Transverse colon (tissue), 4 donors: ENCODE measurements at regions of chr5 and their contacts with region 1.

Region 1: GRCh38 chr5:33409435-33410170 is 31.2 kb upstream of the TARS1 start:
- DNase-seq: peak; percentile 57
- H3K4me3 ChIP-seq: no peak overlapping the region
- H3K27ac ChIP-seq: peak overlapping the region; percentile 10 to 82 (median 57)
- H3K4me1 ChIP-seq: no peaks in the 10 kb centered on the region
- H3K27me3 ChIP-seq: no peaks in the 10 kb centered on the region
- CTCF ChIP-seq: no peak
- EP300 ChIP-seq: peak; percentile 44
- POLR2A ChIP-seq: no peak

Region 2: DNA sequence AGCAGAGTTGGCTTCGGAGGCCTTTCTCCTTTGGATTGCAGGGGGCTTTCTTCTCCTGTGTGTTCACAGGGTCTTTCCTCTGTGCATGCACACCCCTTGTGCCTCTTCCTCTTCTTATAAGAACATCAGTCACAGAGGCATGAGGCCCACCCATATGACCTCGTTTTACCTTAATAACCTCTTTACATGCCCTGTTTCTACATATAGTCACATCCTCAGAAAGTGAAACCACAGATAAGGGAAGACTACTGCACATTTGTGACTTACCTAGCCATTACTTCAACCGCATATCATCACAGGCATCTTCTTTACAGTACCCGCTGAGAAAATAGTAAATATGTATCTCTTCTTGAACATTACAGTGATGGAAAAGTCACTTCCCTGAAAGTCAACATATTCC is 173.8 kb before region 1 on chr5:
- in situ Hi-C with region 1: no loop called
- intact Hi-C with region 1: loop called (anchors 10 kb)
- DNase-seq: no peak
- H3K4me3 ChIP-seq: no peak overlapping the region
- H3K27ac ChIP-seq: no peak overlapping the region
- H3K4me1 ChIP-seq: peaks cover 0 to 29% (median 0%) of the 10 kb centered on the region in 4 donors
- H3K27me3 ChIP-seq: no peaks in the 10 kb centered on the region
- CTCF ChIP-seq: no peak
- EP300 ChIP-seq: no peak
- POLR2A ChIP-seq: no peak

Region 3: GRCh38 chr5:33398501-33398900 is 11.1 kb before region 1 on chr5:
- in situ Hi-C with region 1: no loop called
- intact Hi-C with region 1: no loop called
- DNase-seq: no peak
- H3K4me3 ChIP-seq: no peak overlapping the region
- H3K27ac ChIP-seq: no peak overlapping the region
- H3K4me1 ChIP-seq: no peaks in the 10 kb centered on the region
- H3K27me3 ChIP-seq: no peaks in the 10 kb centered on the region
- CTCF ChIP-seq: no peak
- EP300 ChIP-seq: no peak
- POLR2A ChIP-seq: no peak